ENCODE measurements at regions of chr2 and their contacts with region 1.

Region 1: DNA sequence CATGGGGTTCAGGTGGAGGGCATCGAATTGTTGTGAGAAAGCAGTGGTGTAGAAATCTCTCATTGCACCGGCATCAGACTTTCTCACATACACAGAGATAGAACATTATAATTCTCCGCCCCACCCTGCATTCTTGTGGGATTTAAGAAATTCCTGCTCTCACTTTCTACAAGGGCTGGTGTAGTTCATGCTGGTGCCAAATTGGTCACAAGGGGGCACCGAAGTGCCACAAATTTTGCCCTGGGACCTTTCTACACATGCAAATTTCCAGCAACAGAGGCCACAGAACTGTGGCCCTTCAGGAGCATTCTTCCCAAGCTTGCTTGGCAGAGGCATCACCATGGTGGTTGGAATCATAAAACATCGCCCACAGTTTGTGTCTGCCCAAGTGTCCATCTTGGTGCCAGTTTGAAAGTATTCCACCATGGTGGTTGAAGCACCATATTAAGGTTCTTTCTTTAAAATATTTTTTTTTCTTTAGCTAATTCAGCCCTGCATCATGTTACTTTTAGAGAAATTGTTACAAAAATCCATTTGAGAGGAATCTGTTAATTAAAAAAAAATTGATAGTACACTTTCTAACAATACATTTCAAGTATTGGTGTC is 521.2 kb upstream of the FANCL start:
- DNase-seq: peak; percentile 37
- ATAC-seq: peak; percentile 75
- H3K4me3 Mint-ChIP-seq: no peak overlapping the region
- H3K27ac Mint-ChIP-seq: no peak overlapping the region
- H3K4me1 Mint-ChIP-seq: peaks cover 6% of the 10 kb centered on the region
- H3K27me3 Mint-ChIP-seq: no peaks in the 10 kb centered on the region
- CTCF ChIP-seq: peak; percentile 60

Region 2: GRCh38 chr2:58796239-58796910 is 34.1 kb after region 1 on chr2:
- CTCF ChIA-PET with region 1: no interaction called
- POLR2A ChIA-PET with region 1: no interaction called
- intact Hi-C with region 1: no loop called
- DNase-seq: no peak
- ATAC-seq: no peak
- H3K4me3 Mint-ChIP-seq: no peak overlapping the region
- H3K27ac Mint-ChIP-seq: no peak overlapping the region
- H3K4me1 Mint-ChIP-seq: no peaks in the 10 kb centered on the region
- H3K27me3 Mint-ChIP-seq: peaks cover 9% of the 10 kb centered on the region
- CTCF ChIP-seq: no peak

Region 3: DNA sequence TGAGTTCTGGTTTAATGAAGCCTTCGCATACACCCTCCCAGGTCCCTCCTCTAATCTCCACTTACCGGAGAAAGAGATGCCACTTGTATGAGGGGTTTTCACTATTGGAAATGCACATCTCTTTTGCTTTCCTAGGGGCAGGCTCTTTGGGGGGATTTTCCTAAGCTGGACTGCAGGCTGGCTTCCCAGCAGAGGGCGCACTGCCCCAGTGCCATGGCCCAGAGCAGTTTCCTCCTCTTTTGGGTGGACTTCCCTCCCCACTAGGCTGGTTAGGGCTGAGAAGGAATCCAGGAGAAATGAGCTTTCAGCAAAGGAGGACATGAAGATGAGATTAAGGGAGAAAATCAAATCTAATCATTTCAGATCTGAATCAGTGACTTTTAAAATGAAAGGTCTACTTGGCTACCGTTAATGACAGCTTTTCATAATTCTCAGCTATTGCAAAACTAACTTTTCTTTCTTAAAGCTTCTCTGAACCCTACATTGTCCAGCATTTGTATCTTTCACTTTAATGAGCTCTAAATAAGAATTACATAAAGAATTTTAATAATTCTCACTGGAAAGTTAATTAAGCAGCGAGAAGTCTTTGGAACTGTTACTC is 263.0 kb after region 1 on chr2:
- CTCF ChIA-PET with region 1: interaction called, 4 read pairs
- POLR2A ChIA-PET with region 1: no interaction called
- intact Hi-C with region 1: loop called (anchors 10 kb)
- DNase-seq: peak; percentile 50
- ATAC-seq: peak; percentile 54
- H3K4me3 Mint-ChIP-seq: no peak overlapping the region
- H3K27ac Mint-ChIP-seq: no peak overlapping the region
- H3K4me1 Mint-ChIP-seq: peaks cover 2% of the 10 kb centered on the region
- H3K27me3 Mint-ChIP-seq: peaks cover 10% of the 10 kb centered on the region
- CTCF ChIP-seq: peak; percentile 45

Region 4: DNA sequence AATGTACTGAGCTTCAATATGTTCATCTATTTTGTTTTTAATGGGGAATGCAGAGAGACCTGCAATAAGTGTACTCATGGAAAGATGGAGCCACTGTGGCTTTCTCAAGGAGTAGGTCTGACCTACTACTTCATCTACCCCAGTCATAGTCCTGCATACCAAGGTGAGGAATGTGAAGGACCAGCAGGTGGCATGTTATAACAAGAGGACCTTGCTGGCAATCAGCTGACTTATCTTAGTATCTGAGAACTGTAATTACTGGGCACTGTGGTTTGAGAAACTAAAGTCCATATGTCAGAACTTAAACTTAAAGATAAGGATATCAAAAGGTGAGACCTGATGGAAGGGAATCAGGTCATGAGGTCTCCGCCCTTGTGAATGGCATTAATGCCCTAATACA is 687.0 kb after region 1 on chr2:
- CTCF ChIA-PET with region 1: no interaction called
- POLR2A ChIA-PET with region 1: no interaction called
- intact Hi-C with region 1: loop called (anchors 10 kb)
- DNase-seq: no peak
- ATAC-seq: peak; percentile 77
- H3K4me3 Mint-ChIP-seq: no peak overlapping the region
- H3K27ac Mint-ChIP-seq: no peak overlapping the region
- H3K4me1 Mint-ChIP-seq: no peaks in the 10 kb centered on the region
- H3K27me3 Mint-ChIP-seq: no peaks in the 10 kb centered on the region
- CTCF ChIP-seq: no peak

Region 5: DNA sequence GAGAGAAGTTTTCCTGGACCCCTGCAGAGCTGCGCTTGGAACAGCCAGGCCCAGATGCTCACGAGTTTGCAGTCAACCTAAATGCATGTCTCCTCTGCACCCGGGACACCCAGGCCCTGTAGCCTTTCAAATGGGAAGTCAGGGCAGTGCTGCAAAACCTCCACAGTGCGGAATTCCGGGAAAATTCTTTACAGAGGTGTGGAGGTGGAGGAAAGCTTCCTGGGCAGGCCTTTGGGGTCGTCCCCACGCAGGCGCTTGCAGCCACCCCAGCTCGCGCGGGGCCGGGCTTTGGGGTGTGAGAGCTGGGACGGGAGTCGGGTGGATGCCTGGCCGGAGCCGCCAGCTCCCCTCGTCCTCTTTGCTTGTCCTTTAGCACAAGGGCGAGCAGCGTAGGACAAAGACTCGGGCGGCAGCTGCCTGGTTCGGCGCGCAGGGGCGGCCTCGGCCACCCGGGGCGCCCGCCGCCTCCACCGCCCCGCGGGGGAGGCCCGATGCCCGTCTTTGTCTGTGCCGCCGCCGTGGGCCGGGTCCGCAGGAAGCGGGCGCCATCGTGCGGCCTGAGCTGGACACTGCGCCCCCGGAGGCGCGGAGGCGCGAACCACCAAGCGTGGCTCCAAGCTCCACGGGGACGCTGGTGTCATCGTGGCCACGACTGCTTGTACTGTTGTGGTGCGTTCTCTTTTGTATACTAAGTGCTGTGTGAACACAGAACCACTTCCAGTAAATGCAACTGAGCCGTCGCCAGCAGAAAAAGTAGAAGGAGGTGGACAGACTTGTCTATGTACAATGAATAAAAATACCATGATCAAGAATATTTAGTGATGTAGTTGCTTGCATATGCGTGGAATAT is 1819.4 kb after region 1 on chr2:
- CTCF ChIA-PET with region 1: interaction called, 51 read pairs
- POLR2A ChIA-PET with region 1: no interaction called
- intact Hi-C with region 1: loop called (anchors 1 kb)
- DNase-seq: peak; percentile 85
- ATAC-seq: peak; percentile 100
- H3K4me3 Mint-ChIP-seq: peak overlapping the region; percentile 70
- H3K27ac Mint-ChIP-seq: no peak overlapping the region
- H3K4me1 Mint-ChIP-seq: peaks cover 3% of the 10 kb centered on the region
- H3K27me3 Mint-ChIP-seq: peaks cover 10% of the 10 kb centered on the region
- CTCF ChIP-seq: peak; percentile 64

Region 6: DNA sequence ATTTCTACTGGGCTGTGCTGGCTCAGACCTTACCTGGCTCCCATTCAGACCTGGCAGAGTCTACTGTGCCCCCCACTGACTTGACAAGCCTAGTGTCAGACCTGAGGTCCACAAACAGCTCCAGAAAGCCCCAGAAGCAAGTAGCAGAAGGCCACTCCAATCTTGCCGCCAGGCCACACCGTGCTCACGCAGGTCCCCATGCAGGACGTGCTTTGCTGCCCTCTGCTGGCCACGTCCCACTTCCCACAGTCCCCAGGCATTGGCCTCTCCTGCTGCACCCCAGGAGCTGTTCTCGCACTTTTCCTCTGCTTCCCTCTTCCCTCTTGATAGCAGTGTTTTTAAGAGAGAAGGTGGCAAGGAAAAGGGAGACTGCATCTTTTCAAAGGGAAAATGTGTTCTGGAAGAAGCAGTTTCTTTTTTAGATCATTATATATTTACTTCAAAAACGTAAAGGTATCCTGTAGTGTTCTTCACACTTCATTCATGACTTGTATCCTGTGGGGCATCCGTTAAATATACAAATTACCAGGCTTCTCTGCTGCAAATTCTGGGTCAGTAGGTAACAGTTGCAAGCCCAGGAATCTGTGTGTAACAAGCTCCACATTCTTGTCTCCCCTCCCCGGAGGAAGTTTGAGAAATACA is 1912.4 kb after region 1 on chr2:
- CTCF ChIA-PET with region 1: interaction called, 41 read pairs
- POLR2A ChIA-PET with region 1: no interaction called
- intact Hi-C with region 1: loop called (anchors 1 kb)
- DNase-seq: peak; percentile 77
- ATAC-seq: peak; percentile 100
- H3K4me3 Mint-ChIP-seq: no peak overlapping the region
- H3K27ac Mint-ChIP-seq: no peak overlapping the region
- H3K4me1 Mint-ChIP-seq: peaks cover 3% of the 10 kb centered on the region
- H3K27me3 Mint-ChIP-seq: peaks cover 2% of the 10 kb centered on the region
- CTCF ChIP-seq: peak; percentile 96

Measured in activated B cell treated with CpG ODN at 0.5 μM for 24 hours (primary cell).